Calu3 (cell line): ENCODE measurements at regions of chr22 and their contacts with region 1.

Region 1: DNA sequence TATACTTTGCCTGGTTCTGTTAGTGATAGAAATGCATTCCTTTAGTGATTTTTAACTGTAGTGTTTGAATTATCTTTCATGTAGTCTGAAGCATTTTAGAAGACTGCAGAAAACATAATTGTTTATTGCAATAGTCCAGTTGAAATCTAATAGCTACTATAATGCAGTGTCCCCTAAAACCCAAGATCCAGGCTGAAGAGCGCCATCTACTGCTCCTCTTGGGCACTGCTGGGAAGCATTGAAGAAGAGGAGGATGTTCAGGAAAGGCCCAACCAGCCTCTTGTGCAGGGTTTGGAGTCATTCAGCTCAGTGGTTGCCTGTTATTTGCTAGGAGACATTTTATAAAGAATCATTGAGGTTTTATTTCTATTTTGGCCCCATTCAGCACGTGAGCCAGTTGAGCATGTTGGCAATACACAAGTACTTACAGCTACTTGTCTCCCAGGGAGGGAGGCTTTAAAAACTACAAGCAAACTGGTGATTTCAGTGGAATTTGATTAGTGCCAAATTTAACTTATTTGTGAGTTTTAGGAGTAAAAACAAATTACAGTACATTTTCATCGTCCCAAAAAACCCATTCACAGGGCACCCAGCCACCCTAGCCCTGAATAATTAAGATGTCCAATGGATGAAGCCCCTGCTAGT is 74.9 kb upstream of the HORMAD2 start:
- DNase-seq: peak; percentile 75
- H3K4me3 Mint-ChIP-seq: no peak overlapping the region
- H3K27ac Mint-ChIP-seq: no peak overlapping the region
- H3K4me1 Mint-ChIP-seq: peaks cover 18% of the 10 kb centered on the region
- H3K27me3 Mint-ChIP-seq: no peaks in the 10 kb centered on the region
- CTCF ChIP-seq: peak; percentile 95

Region 2: GRCh38 chr22:29689880-29690213 is 315.5 kb before region 1 on chr22:
- CTCF ChIA-PET with region 1: interaction called, 25 read pairs
- intact Hi-C with region 1: no loop called
- DNase-seq: peak; percentile 60
- H3K4me3 Mint-ChIP-seq: no peak overlapping the region
- H3K27ac Mint-ChIP-seq: no peak overlapping the region
- H3K4me1 Mint-ChIP-seq: no peaks in the 10 kb centered on the region
- H3K27me3 Mint-ChIP-seq: no peaks in the 10 kb centered on the region
- CTCF ChIP-seq: peak; percentile 74

Region 3: GRCh38 chr22:29772170-29772641 is 233.1 kb before region 1 on chr22:
- CTCF ChIA-PET with region 1: interaction called, 10 read pairs
- intact Hi-C with region 1: no loop called
- DNase-seq: no peak
- H3K4me3 Mint-ChIP-seq: no peak overlapping the region
- H3K27ac Mint-ChIP-seq: peak overlapping the region; percentile 78
- H3K4me1 Mint-ChIP-seq: peaks cover 33% of the 10 kb centered on the region
- H3K27me3 Mint-ChIP-seq: no peaks in the 10 kb centered on the region
- CTCF ChIP-seq: no peak

Region 4: GRCh38 chr22:29883045-29883774 is 122.1 kb before region 1 on chr22 and contains the start of gene MTMR3:
- CTCF ChIA-PET with region 1: interaction called, 17 read pairs
- intact Hi-C with region 1: no loop called
- DNase-seq: peak; percentile 98
- H3K4me3 Mint-ChIP-seq: peak within 1 kb of the TSS; percentile 92
- H3K27ac Mint-ChIP-seq: peak within 1 kb of the TSS; percentile 68
- H3K4me1 Mint-ChIP-seq: no peaks in the 10 kb centered on the region
- H3K27me3 Mint-ChIP-seq: no peaks in the 10 kb centered on the region
- CTCF ChIP-seq: peak; percentile 63
- total RNA-seq, gene MTMR3: 34.5 and 40.1 TPM in 2 replicates

Region 5: DNA sequence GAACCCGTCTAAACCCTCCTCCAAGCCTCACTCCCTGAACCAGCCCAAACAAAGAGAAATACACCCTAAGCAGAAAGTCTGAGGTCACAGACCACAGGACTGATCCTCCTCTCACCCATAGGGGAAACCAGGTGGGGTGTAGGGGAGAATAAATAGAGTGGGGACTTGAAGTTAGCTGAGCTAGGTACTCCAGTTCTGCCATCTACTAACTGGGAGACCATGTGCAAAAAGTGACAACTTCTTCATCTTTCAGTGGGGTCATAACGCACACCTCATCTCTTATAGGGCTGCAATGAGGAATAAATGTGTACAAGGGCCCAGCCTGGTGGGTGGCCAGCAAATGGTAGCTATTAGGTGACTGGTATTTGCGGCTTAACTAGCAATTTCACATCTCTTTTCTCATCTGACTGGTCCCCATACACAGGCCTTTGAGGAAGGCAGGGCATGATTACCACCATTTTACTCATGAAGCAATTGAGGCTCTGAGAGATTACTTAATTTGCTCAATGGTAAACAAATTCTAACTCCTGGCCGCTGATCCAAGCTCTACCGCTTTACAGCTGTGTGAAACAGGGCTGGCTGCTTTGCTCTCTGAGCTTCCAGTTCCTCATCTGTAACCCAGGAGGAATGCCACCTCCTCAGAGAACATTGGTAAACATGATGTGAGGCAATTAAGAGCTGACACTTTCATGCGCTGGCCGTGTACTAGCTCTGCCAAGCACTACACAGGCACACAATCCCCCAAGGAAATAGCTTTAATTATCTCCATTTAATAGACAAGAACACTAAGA is 304.8 kb after region 1 on chr22:
- CTCF ChIA-PET with region 1: no interaction called
- intact Hi-C with region 1: no loop called
- DNase-seq: no peak
- H3K4me3 Mint-ChIP-seq: no peak overlapping the region
- H3K27ac Mint-ChIP-seq: no peak overlapping the region
- H3K4me1 Mint-ChIP-seq: peaks cover 92% of the 10 kb centered on the region
- H3K27me3 Mint-ChIP-seq: no peaks in the 10 kb centered on the region
- CTCF ChIP-seq: no peak